Caki2 (cell line): ENCODE measurements at regions of chr2 and their contacts with region 1.

Region 1: GRCh38 chr2:23926750-23927571 is at the start of gene ATAD2B:
- DNase-seq: peak; percentile 98
- total RNA-seq, gene ATAD2B: 2.0 and 5.7 TPM in 2 replicates

Region 2: DNA sequence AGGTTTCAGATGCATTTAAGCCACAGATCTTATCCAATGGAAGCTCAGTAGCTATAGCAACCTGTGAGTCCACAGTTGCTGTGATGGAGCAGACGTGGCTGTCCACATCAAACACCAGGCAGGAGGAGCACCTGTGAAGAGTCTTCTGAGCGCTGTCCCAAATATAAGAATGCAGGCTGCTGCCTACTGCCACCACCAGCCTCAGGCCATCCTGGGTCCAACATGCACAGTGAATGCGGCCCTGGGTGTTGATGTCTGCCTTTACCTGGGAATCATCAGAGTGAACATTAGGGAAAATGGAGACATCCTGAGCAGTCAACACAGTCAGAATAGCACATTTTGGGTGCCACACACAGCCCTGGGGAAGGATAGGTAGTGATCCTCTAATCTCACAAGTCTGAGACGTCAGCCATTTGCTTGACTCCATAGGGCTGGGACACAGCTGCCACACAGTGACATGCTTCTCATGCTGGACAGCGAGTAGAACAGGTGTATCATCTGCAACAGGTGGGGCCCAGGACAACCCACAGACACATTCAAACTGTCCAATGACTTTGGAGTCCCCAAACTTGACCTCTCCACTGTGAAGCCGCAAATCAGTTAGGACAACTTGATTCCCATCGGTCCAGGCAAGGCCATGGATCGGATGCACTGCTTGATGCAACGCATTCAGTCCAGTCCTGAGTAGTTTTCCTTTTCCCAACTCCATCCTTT is 112.0 kb after region 1 on chr2:
- in situ Hi-C with region 1: no loop called
- DNase-seq: no peak

Region 3: GRCh38 chr2:24058564-24059271 is 131.8 kb after region 1 on chr2:
- in situ Hi-C with region 1: loop called (anchors 5 kb)
- DNase-seq: no peak